Head of caudate nucleus (tissue), 42 donors: ENCODE measurements at regions of chr6 and their contacts with region 1.

Region 1: DNA sequence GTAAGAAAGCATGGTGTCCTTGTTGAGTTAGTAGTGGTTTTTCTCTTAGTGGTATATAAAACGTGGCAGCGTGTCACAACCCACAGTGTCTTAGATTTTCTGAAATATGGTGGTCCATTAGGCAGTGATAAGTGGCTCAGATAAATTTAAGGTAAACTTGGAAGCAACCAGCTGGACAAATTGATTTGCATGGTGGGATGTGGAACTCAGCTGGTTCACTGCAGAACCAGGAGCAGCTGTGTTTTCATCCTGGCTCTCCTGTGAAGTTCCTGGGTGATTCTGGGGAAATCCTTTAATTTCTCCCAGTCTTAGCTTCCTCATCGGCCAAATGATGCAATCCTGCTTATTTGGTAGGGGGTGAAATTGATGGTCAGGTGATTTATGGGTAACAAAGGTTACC is 32.9 kb upstream of the EEF1E1 start:
- DNase-seq: no peak

Region 2: DNA sequence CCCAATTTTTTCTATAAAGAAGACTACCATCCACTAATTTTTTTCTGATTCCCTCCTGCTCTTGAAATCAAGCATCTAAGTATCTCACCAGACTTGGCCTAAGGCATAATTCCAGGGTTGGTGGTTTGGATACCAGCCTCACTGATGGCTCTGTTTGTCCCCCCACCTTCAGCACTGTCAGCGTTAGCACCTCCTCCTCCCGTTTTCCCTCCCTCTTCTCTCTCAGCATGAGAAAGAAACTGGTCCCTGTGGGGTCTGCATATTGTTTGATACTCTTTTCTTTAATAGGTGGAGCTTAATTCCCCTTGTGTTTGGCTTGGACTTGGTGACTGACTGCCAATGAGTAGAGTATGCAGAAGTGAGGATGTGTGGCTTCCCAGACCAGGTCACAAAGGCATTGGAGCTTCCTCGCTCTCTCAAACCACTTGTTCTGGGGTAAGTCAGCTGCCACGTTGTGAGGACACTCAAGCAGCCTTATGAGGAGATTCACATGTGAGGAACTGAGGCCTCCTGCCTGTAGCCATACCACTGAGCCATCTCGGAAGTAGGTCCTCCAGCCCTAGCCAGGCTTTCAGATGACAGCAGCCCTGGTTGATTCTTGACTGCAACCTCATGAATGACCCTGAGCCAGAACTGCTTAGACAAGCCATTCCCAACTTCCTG is 680.4 kb before region 1 on chr6:
- intact Hi-C with region 1: no loop called
- DNase-seq: no peak

Region 3: DNA sequence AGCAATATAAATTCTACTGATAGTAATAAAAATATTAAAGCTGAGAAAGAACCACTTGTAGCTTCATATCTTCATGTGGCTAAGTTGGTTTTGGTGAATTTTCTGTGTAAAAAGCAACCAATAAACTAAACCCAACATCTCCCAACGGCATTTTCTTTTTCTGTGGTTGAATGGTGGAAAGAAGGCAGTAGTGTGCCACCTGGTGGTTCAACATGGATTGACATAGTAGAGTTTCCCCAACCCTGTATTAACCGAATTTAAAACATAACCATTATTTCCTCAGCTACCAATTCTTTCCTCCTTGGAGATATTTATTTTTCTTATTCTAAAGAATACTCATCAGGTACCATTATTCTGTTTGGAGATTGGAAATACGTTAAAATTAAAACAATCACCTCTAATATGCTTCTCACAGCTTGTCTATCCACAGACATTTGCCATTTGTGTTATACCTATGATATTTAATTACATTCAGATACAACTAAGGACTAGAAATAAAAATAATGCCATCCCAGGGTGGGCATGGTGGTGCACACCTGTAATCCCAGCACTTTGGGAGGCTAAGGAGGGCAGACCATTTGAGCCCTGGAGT is 84.2 kb after region 1 on chr6:
- intact Hi-C with region 1: loop called (anchors 2 kb)
- DNase-seq: peak in 33 of 42 donors; percentile 8 to 84 (median 49)